ENCODE measurements at regions of chr1 and their contacts with region 1.

Region 1: DNA sequence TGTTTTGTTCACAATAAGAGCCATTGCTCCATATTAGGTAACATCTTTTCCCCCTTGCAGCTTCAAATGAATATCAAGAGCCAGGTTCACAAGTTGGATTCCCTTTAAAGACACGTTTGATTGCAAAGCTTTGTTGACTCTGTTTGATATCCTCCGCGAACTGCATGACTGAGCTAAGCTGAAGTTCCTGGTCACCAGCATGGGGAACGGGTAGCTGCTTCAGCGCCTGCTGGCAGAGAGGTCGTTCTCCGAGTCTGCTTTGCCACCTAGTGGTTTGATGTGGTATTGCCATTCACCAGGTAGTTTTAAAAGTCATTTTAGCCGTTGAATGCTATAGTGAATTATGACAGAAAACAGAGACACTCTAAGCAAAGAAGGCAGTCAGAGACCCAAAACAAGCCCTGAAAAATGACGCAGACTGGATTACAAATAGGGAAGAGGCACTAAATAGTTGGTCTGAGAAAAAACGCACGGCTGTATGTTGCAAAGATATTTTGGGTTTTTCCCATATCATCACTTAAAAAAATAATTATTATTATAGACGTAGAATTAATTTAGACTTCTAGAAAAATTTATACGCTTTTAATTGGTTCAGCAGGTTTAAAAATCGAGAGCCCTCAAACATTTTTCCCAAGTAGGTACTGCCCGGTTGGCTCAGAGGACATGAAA is 193.5 kb upstream of the FMN2 start:
- H3K4me3 ChIP-seq: no peak overlapping the region
- H3K27ac ChIP-seq: no peak overlapping the region
- H3K4me1 ChIP-seq: peaks cover 6% of the 10 kb centered on the region
- CTCF ChIP-seq: peak; percentile 94

Region 2: DNA sequence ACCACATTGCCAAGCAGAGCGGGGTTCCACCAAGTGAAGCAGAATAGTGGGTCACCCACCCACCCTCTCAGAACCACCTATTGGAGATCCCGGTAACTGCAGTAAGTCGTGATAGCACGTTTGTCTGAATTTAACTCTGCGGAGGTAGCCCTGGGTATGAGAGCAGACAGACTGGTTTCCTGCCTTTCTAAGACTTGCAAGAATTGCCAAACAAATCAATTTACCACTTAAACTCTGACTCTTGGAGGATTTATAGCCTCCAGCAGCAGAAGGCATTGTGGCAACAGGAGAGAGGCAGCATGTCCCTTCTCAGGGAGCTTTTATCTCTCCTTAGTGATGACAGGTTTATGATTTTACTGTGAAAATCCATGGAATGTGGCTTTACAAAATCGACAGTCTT is 94.4 kb before region 1 on chr1:
- CTCF ChIA-PET with region 1: interaction called, 10 read pairs
- POLR2A ChIA-PET with region 1: no interaction called
- H3K4me3 ChIP-seq: no peak overlapping the region
- H3K27ac ChIP-seq: no peak overlapping the region
- H3K4me1 ChIP-seq: peaks cover 12% of the 10 kb centered on the region
- CTCF ChIP-seq: no peak

Region 3: DNA sequence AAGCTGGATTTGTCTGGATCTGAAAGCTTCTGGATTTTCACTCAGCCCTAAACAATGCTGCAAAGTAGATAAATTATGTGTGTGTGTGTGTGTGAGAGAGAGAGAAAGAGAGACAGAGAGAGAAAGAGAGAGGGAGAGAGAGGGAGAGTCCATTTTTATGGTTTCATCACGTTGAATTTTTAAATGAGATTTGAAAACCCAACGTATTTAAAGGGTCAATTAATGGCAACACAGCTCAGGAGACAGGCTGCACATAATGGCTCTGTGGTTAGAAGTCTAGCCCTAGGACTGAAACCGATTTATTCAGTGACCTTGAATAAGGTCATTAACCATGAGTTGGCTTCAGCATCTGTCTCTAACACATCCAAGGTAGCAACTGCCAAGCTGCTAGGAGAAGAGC is 158.2 kb after region 1 on chr1:
- CTCF ChIA-PET with region 1: no interaction called
- POLR2A ChIA-PET with region 1: no interaction called
- H3K4me3 ChIP-seq: no peak overlapping the region
- H3K27ac ChIP-seq: no peak overlapping the region
- H3K4me1 ChIP-seq: peaks cover 4% of the 10 kb centered on the region; the same call in 1 of the 2 replicates
- CTCF ChIP-seq: no peak